WTC11 (cell line): ENCODE measurements at regions of chr1 and their contacts with region 1.

Region 1: GRCh38 chr1:17236779-17237560 is 11.9 kb upstream of the PADI3 start:
- DNase-seq: peak; percentile 98
- ATAC-seq: peak; percentile 87
- H3K4me3 Mint-ChIP-seq: no peak overlapping the region
- H3K27ac Mint-ChIP-seq: no peak overlapping the region
- H3K4me1 Mint-ChIP-seq: peaks cover 19% of the 10 kb centered on the region
- H3K27me3 Mint-ChIP-seq: no peaks in the 10 kb centered on the region
- CTCF ChIP-seq: peak; percentile 92

Region 2: GRCh38 chr1:17059739-17060460 is 177.1 kb before region 1 on chr1:
- CTCF ChIA-PET with region 1: interaction called, 17 read pairs
- POLR2A ChIA-PET with region 1: no interaction called
- DNase-seq: peak; percentile 83
- ATAC-seq: peak; percentile 99
- H3K4me3 Mint-ChIP-seq: no peak overlapping the region
- H3K27ac Mint-ChIP-seq: peak overlapping the region; percentile 17; the same call in 1 of the 2 replicates
- H3K4me1 Mint-ChIP-seq: peaks cover 39% of the 10 kb centered on the region
- H3K27me3 Mint-ChIP-seq: no peaks in the 10 kb centered on the region
- CTCF ChIP-seq: peak; percentile 50; the same call in 1 of the 2 replicates

Region 3: DNA sequence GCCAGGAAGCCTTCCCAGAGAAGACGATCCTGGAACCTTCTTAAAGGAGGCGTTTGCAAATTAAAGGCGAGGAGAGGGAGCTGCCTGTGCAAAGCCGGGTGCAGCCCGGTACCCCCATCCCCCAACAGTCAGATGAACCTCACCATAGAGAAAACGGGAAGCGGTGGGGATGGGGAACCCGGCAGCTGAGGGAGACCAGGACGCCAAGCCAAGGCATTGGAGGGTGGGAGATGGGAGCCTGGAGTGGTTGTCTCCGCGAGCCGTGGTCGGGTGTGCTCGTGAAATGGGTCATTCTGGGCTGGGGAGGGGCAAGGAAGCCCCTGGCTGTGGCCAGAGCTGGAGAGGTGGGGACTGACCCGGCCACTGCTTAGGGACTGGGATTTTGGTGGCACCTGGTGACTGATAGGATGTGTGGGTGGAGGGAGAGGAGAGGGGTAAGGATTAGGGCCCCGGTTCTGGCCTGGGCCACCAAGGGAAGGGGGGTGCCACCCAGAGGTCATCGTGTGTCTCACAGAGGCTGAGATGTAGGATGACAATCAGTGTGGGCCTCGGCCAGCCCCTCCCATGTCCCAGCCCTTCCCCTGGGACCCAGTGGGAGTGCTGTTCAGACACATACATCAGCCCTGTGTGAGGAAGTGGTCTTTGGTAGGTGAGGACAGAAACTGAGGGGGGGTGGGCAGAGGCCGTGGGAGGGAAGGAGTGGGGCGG is 117.0 kb before region 1 on chr1:
- CTCF ChIA-PET with region 1: interaction called, 53 read pairs
- POLR2A ChIA-PET with region 1: no interaction called
- DNase-seq: no peak
- ATAC-seq: peak; percentile 24
- H3K4me3 Mint-ChIP-seq: peak overlapping the region; percentile 79
- H3K27ac Mint-ChIP-seq: no peak overlapping the region
- H3K4me1 Mint-ChIP-seq: peaks cover 19% of the 10 kb centered on the region
- H3K27me3 Mint-ChIP-seq: peaks cover 54% of the 10 kb centered on the region
- CTCF ChIP-seq: no peak

Region 4: DNA sequence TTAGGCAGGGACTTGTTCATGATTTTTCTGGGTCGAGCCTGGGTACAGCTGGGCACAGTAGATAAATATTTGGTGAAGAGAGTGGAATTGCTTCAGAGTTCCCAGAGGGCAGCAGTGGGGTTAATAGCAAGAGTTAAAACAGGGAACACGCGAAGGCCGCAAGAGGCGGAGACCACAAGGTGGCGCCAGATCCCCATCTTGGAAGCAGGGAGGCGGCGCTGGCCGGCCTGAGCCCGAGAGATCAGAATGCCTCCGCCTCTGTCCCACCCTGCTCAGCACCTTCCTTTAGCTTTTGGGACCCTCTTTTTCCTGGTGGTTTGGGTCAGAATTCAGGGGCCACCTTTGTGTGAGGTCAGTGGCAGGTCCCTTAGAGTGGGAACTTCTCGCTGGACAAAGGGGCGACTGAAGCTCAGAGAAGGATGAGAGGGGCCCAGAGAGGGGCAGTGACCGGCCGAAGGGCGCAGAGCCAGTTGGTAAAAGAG is 111.2 kb before region 1 on chr1:
- CTCF ChIA-PET with region 1: interaction called, 53 read pairs
- POLR2A ChIA-PET with region 1: no interaction called
- DNase-seq: peak; percentile 96
- ATAC-seq: peak; percentile 84
- H3K4me3 Mint-ChIP-seq: no peak overlapping the region
- H3K27ac Mint-ChIP-seq: peak overlapping the region; percentile 79; the same call in 1 of the 2 replicates
- H3K4me1 Mint-ChIP-seq: peaks cover 39% of the 10 kb centered on the region
- H3K27me3 Mint-ChIP-seq: peaks cover 7% of the 10 kb centered on the region; the same call in 1 of the 2 replicates
- CTCF ChIP-seq: peak; percentile 96

Region 5: DNA sequence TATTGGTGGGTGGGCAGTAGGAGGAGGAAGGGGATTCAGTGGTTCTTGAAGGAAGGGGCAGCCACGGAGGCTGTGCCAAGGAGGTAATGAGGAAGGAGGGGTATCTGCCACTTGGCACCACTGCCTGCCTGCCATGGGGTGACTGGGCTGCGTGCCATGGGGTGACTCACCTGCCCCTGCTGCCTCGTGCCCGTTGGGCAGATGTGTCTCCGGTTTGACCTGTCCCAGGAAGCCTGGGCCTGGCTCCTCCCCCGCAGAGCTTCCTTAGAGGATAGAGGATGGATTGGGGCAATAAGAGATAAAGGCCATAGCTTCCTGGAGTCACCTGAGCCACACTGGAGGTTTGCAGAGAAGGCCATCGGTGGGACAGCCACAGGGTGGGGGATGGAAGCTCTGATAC is 13.6 kb after region 1 on chr1:
- CTCF ChIA-PET with region 1: interaction called, 19 read pairs
- POLR2A ChIA-PET with region 1: no interaction called
- DNase-seq: no peak
- ATAC-seq: no peak
- H3K4me3 Mint-ChIP-seq: no peak overlapping the region
- H3K27ac Mint-ChIP-seq: no peak overlapping the region
- H3K4me1 Mint-ChIP-seq: peaks cover 15% of the 10 kb centered on the region
- H3K27me3 Mint-ChIP-seq: no peaks in the 10 kb centered on the region
- CTCF ChIP-seq: no peak